ENCODE measurements at regions of chr21 and their contacts with region 1.

Region 1: DNA sequence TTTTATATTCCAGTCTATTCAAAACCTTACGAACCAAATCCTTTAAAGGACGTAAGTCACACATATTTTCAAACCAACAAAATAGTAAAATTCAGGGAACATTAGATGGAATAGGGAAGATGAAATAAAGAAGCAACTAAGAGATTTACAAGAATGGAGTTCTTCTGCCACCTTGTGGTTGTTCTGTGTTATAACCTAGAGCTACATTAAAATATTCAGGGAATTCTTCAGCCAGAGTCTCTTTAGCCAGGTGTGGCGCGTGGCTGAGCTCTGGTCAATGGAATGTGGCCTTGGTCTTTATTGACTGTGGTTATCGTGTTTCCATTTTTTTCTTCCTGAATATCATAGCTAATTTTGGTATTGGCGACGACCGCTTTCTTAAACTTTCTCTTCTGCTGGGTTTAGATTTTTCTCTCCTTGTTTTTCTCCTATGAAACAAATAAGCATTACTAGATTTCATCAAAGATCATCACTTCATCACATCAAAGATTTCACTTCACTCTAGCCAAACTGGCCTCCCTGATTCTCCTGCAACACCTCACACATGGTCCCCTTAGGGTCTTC is 221.3 kb downstream of the MRPL39 start:
- H3K4me3 ChIP-seq: no peak overlapping the region
- H3K27ac ChIP-seq: no peak overlapping the region
- H3K4me1 ChIP-seq: no peaks in the 10 kb centered on the region
- CTCF ChIP-seq: no peak

Region 2: DNA sequence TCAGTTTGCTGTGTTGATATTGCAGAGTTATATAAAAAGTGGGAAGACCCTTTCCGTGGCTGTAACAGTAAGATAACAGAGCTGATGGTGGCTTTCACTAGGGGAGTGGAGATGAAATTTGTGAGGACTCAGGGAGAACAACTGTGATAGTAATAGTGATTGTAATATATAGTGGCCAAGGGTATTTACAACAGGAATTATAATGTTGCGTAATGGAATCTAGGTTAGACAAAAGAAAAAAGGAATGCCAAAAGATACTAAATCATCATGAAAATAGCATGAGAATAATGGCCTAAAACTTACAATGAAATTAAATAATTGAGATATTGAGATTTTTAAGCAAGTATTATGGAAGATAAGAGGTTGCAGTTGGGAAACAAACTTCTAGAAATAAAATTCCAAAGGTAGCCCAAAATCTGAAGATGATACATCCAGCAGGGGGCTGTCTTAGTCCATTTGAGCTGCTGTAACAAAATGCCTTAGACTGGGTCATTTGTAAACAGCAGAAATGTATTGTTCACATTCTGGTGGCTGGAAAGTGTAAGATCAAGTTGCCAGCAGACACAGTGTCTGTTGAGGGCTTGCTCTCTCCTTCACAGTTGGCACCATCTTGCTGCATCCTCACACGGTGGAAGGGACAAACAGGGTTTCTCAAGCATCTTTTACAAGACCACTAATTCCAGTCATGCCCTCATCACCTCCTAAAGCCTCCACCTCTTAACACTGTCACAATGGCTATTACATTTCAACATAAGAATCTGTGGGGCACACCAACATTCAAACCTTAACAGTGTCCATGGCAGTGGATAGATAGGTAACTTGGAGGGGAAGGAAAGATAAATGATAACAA is 489.9 kb before region 1 on chr21:
- CTCF ChIA-PET with region 1: interaction called, 15 read pairs
- POLR2A ChIA-PET with region 1: no interaction called
- H3K4me3 ChIP-seq: no peak overlapping the region
- H3K27ac ChIP-seq: no peak overlapping the region
- H3K4me1 ChIP-seq: no peaks in the 10 kb centered on the region
- CTCF ChIP-seq: no peak

Region 3: DNA sequence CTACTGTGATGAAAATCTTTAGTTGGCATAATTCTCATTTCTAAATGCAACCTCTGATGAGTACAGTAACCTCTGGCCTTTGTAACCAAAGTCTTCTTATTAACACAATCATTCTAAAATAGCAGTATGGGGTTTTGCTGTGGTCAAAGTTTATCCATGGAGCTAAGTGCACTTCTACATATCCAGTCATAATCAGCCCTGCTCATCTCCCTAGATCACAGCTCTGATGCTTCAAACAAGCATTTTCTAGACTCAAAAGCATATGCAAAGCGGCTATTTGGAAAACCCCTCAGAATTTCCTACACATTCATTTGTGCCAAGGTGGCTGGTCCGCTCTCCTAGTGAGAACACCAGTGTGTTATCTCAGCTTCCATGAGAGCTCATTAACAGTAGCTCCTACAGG is 197.3 kb before region 1 on chr21:
- CTCF ChIA-PET with region 1: no interaction called
- POLR2A ChIA-PET with region 1: no interaction called
- H3K4me3 ChIP-seq: no peak overlapping the region
- H3K27ac ChIP-seq: no peak overlapping the region
- H3K4me1 ChIP-seq: no peaks in the 10 kb centered on the region
- CTCF ChIP-seq: no peak

Region 4: DNA sequence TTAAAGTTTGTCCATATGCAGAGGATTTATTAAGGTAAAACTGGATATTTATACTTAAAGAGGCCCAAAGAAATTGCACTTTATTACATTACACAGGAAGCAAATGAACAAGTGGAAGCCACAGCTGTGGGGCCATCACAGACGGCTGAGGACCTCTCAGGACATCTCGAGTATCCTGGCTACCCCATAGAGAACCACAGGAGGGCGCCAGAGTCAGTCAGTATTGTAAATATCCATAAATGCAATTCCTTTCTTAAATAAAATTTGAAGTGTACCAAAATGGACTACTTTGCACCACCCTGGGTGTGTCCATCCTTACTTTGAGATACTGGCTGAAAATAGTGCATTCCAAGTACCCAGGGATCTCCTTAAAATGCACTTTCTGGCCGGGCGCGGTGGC is 35.9 kb before region 1 on chr21:
- CTCF ChIA-PET with region 1: interaction called, 19 read pairs
- POLR2A ChIA-PET with region 1: no interaction called
- H3K4me3 ChIP-seq: no peak overlapping the region
- H3K27ac ChIP-seq: no peak overlapping the region
- H3K4me1 ChIP-seq: no peaks in the 10 kb centered on the region
- CTCF ChIP-seq: no peak